Activated CD4-positive, alpha-beta T cell treated with anti-CD3 and anti-CD28 coated beads, Interleukin-2, amount 10 ng/mL, durations not matched to agents 24 days and 14 days (primary cell): ENCODE measurements at regions of chr2 and their contacts with region 1.

Region 1: GRCh38 chr2:127649684-127650040 is 3.7 kb downstream of the GPR17 start:
- DNase-seq: peak; percentile 95
- H3K4me3 Mint-ChIP-seq: no peak overlapping the region
- H3K27ac Mint-ChIP-seq: peak overlapping the region; percentile 56
- H3K4me1 Mint-ChIP-seq: peaks cover 7% of the 10 kb centered on the region
- H3K27me3 Mint-ChIP-seq: no peaks in the 10 kb centered on the region

Region 2: GRCh38 chr2:127197475-127198385 is 451.9 kb before region 1 on chr2:
- intact Hi-C with region 1: loop called (anchors 5 kb)
- DNase-seq: peak; percentile 85
- H3K4me3 Mint-ChIP-seq: peak overlapping the region; percentile 76
- H3K27ac Mint-ChIP-seq: no peak overlapping the region
- H3K4me1 Mint-ChIP-seq: peaks cover 7% of the 10 kb centered on the region
- H3K27me3 Mint-ChIP-seq: no peaks in the 10 kb centered on the region

Region 3: DNA sequence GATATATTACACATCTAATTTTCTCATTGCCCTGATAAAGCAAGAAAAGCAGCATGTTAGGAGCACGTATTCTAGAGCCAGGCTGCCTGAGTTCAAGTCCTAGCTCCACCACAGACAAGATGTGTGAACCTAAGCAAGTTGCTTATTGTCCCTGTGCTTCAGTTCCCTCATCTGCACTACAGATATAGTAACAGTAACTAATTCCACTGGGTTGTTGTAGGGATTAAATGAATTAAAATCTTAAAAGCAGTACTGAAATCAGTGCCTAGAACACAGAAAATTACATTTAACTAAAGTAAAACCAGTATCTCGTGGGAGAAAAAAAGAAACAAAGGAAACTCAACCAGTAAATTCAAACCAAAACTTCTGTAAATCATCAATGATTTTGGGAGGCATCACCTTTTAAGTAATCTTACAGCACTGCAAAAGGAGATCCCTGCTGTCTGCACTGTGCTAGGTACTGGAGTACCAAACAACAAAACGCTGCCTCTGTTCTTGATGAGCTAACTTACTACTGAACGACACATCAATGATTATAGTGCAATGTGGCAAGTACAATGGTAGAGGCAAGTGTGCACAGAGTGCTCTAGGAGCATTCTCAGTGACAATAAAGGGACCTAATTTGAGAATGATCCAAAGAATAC is 269.8 kb before region 1 on chr2:
- intact Hi-C with region 1: no loop called
- DNase-seq: no peak
- H3K4me3 Mint-ChIP-seq: no peak overlapping the region
- H3K27ac Mint-ChIP-seq: no peak overlapping the region
- H3K4me1 Mint-ChIP-seq: peaks cover 24% of the 10 kb centered on the region
- H3K27me3 Mint-ChIP-seq: no peaks in the 10 kb centered on the region

Region 4: GRCh38 chr2:127591221-127591923 is 58.3 kb before region 1 on chr2:
- intact Hi-C with region 1: loop called (anchors 1 kb)
- DNase-seq: peak; percentile 89
- H3K4me3 Mint-ChIP-seq: no peak overlapping the region
- H3K27ac Mint-ChIP-seq: no peak overlapping the region
- H3K4me1 Mint-ChIP-seq: no peaks in the 10 kb centered on the region
- H3K27me3 Mint-ChIP-seq: no peaks in the 10 kb centered on the region

Region 5: GRCh38 chr2:127721311-127721977 is 71.8 kb after region 1 on chr2:
- intact Hi-C with region 1: no loop called
- DNase-seq: peak; percentile 29
- H3K4me3 Mint-ChIP-seq: no peak overlapping the region
- H3K27ac Mint-ChIP-seq: no peak overlapping the region
- H3K4me1 Mint-ChIP-seq: peaks cover 5% of the 10 kb centered on the region
- H3K27me3 Mint-ChIP-seq: no peaks in the 10 kb centered on the region